AG04449 (cell line): ENCODE measurements at regions of chr15 and their contacts with region 1.

Region 1: GRCh38 chr15:61195116-61196002 is 33.7 kb downstream of the RORA start:
- DNase-seq: no peak
- H3K4me3 ChIP-seq: no peak overlapping the region
- CTCF ChIP-seq: peak; percentile 75

Region 2: DNA sequence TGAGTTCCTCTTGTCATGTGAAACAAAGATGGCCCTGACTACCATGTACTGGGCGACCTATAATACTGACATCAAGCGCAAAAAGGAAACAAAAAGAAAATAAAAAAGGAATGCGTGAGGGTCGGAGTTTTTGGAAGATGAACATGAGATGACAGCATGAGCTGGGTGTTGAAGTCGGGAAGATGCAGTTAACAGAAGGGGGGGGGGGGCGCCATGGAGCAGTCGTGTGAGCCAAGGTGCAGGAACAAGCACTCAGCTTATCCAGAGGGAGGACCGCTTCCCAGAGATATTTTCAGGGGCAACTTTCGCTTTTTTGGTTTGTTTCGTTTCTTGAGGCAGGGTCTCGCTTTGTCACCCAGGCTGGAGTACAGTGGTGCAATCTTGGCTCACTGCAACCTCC is 76.5 kb before region 1 on chr15:
- CTCF ChIA-PET with region 1: no interaction called
- POLR2A ChIA-PET with region 1: no interaction called
- DNase-seq: no peak
- H3K4me3 ChIP-seq: no peak overlapping the region
- CTCF ChIP-seq: no peak

Region 3: GRCh38 chr15:61205346-61205921 is 10.1 kb after region 1 on chr15:
- CTCF ChIA-PET with region 1: interaction called, 17 read pairs
- POLR2A ChIA-PET with region 1: no interaction called
- DNase-seq: no peak
- H3K4me3 ChIP-seq: no peak overlapping the region
- CTCF ChIP-seq: no peak

Region 4: DNA sequence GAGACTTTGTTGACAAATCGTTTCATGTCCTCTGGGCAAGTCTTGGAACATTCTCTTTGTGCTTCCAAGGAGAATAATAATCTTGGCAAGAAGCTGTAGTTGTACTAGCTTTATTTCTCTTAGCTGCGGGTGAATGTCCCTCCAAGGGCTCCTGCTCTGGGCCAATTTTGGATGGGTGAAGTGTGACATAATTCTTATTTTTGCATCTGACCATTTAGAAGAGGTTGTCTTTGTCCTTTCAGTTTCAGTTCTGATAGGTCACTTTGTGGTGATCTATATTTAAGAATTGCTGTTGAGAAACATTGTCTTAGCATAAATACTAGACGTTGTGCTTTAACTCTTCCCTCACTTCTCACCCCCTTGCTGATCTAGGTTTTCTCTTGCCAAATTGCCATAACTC is 198.6 kb after region 1 on chr15:
- CTCF ChIA-PET with region 1: no interaction called
- POLR2A ChIA-PET with region 1: no interaction called
- DNase-seq: no peak
- H3K4me3 ChIP-seq: no peak overlapping the region
- CTCF ChIP-seq: no peak